CD4-positive, alpha-beta memory T cell (primary cell): ENCODE measurements at regions of chr11 and their contacts with region 1.

Region 1: DNA sequence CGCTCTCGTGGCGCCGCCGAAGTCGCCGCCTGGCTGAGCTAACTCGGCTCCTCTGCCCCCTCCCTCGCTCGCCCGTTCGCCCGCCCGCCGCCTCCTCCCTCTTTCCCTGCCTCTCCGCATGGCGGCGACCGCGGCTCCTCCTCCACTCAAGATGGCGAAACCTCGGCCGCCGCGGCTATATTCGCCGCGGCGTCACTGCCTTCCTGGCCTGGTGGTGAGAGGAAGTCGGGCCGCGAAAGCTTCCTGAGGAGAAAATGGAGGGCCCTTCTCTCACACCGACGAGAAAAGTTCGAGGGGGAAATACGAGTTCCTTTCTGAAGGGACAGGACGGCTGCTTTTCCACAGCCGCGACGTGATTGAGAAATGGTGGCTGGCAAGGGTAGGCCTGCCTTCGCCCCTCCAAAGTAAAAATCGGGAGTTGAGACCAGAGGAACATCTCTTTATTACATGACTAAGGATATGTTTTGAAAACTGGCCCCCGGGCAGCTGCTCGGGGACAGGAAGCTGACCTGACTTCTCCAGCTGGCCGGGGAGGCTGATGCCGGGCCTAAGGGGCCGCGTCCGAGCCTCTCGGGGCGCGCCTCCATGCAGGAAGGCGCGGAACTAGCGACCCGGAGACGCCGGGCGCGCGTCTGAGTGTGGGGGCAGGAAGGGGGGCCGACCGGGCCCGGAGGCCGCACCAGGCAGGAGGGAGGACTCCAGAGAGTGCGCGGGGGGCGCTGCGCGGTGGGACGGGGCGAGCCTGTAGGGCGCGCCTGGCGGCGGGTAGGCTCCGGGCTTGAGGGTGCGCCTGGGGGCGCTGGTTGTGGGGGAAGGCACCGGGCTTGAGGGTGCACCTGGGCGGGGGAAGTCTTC is at the start of gene DDX6:
- DNase-seq: peak; percentile 89 to 92 (median 91)
- H3K4me3 ChIP-seq: peak within 1 kb of the TSS; percentile 68 to 98
- H3K4me3 Mint-ChIP-seq: peak within 1 kb of the TSS; percentile 95 to 100 (median 99)
- H3K27ac ChIP-seq: peak within 1 kb of the TSS; percentile 99
- H3K27ac Mint-ChIP-seq: peak within 1 kb of the TSS; percentile 98 to 100 (median 99)
- H3K4me1 ChIP-seq: peaks cover 30% of the 10 kb centered on the region
- H3K4me1 Mint-ChIP-seq: peaks cover 9 to 54% (median 18%) of the 10 kb centered on the region in 4 donors
- H3K27me3 ChIP-seq: no peaks in the 10 kb centered on the region
- H3K27me3 Mint-ChIP-seq: no peaks in the 10 kb centered on the region
- total RNA-seq, gene DDX6: 299 to 304 TPM

Region 2: GRCh38 chr11:118705111-118705741 is 86.1 kb before region 1 on chr11:
- CTCF ChIA-PET with region 1: interaction called, 9 read pairs
- POLR2A ChIA-PET with region 1: interaction called, 98 read pairs
- intact Hi-C with region 1: no loop called
- DNase-seq: peak; percentile 63 to 72 (median 70)
- H3K4me3 ChIP-seq: peak overlapping the region in 1 of 2 donors; percentile 29
- H3K4me3 Mint-ChIP-seq: peak overlapping the region; percentile 48 to 90 (median 74)
- H3K27ac ChIP-seq: peak overlapping the region; percentile 3
- H3K27ac Mint-ChIP-seq: peak overlapping the region; percentile 61 to 95 (median 89)
- H3K4me1 ChIP-seq: peaks cover 50% of the 10 kb centered on the region
- H3K4me1 Mint-ChIP-seq: peaks cover 27 to 48% (median 37%) of the 10 kb centered on the region in 4 donors
- H3K27me3 ChIP-seq: no peaks in the 10 kb centered on the region
- H3K27me3 Mint-ChIP-seq: no peaks in the 10 kb centered on the region

Region 3: DNA sequence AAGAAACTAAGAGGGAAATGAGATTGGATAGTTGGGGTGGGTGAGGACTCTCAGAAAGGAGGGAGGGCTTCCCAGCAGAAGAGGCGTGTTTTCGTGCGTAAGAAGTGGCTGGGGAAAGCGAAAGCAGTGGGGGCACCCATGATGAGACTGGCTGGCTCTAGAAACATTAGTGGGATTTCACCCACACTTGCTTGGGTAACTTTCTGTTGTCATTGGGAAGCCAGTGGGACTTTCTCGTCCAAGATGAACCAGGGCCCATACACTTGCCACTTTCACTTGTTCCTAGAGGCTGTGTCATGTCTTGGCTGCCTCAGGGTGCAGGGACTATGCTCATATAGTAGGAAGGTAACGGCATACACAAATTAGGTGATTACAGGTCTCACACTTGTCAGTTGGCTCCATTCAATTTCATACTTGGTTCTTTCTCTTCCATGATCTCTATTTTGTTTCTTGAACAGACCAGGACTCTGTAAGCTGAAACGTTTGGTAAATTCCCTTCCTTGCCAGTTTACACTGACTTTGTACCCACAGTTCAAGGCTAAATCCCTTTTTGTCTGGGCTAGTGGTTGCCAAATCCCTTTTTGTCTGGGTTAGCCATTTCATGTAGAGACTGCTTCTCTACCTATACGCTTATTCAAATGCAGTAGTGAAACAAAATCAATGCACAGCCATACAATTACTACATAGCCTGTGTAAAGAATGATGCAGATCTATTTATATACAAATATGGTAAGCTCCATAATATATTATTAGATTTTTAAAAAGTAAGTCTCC is 50.3 kb after region 1 on chr11:
- CTCF ChIA-PET with region 1: interaction called, 6 read pairs
- POLR2A ChIA-PET with region 1: interaction called, 4 read pairs
- intact Hi-C with region 1: loop called (anchors 5 kb)
- DNase-seq: peak; percentile 50 to 77 (median 56)
- H3K4me3 ChIP-seq: peak overlapping the region; percentile 30 to 49
- H3K4me3 Mint-ChIP-seq: peak overlapping the region; percentile 82 to 89 (median 86)
- H3K27ac ChIP-seq: peak overlapping the region; percentile 57
- H3K27ac Mint-ChIP-seq: peak overlapping the region; percentile 59 to 93 (median 92)
- H3K4me1 ChIP-seq: peaks cover 7% of the 10 kb centered on the region
- H3K4me1 Mint-ChIP-seq: peaks cover 7 to 17% (median 15%) of the 10 kb centered on the region in 4 donors
- H3K27me3 ChIP-seq: no peaks in the 10 kb centered on the region
- H3K27me3 Mint-ChIP-seq: no peaks in the 10 kb centered on the region

Region 4: GRCh38 chr11:118883368-118884071 is 92.2 kb after region 1 on chr11 and contains the start of gene CXCR5:
- CTCF ChIA-PET with region 1: interaction called, 62 read pairs
- POLR2A ChIA-PET with region 1: interaction called, 231 read pairs
- intact Hi-C with region 1: no loop called
- DNase-seq: peak; percentile 44 to 73 (median 51)
- H3K4me3 ChIP-seq: peak within 1 kb of the TSS; percentile 34 to 51
- H3K4me3 Mint-ChIP-seq: peak within 1 kb of the TSS; percentile 76 to 91 (median 87)
- H3K27ac ChIP-seq: peak within 1 kb of the TSS; percentile 64
- H3K27ac Mint-ChIP-seq: peak within 1 kb of the TSS; percentile 91 to 97 (median 94)
- H3K4me1 ChIP-seq: peaks cover 70% of the 10 kb centered on the region
- H3K4me1 Mint-ChIP-seq: peaks cover 46 to 87% (median 60%) of the 10 kb centered on the region in 4 donors
- H3K27me3 ChIP-seq: no peaks in the 10 kb centered on the region
- H3K27me3 Mint-ChIP-seq: no peaks in the 10 kb centered on the region
- total RNA-seq, gene CXCR5: 21.1 to 21.5 TPM

Region 5: DNA sequence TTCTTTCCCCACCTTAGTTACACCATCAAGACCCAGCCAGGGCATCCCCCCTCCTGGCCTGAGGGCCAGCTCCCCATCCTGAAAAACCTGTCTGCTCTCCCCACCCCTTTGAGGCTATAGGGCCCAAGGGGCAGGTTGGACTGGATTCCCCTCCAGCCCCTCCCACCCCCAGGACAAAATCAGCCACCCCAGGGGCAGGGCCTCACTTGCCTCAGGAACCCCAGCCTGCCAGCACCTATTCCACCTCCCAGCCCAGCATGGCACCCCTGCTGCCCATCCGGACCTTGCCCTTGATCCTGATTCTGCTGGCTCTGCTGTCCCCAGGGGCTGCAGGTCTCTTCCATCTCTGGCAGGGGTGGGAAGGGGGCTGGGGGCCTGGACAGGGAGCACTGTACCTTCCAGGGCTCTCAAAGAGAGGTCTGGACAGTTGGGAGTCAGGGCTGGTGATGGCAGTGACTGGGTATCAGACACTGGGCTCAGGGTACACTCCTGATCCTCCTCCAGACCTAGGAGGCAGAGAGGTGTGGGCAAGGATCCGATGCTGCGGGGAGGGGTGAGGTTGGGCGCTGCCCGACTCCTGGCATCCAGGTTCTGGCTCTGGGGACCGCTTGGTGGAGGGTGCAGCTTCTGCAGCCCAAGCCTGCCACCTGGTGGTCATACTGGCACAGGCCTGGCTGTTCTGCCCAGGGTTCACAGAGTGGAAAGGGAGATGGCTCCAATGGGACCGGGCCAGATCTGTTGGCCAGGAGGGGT is 164.9 kb after region 1 on chr11 and contains the start of gene UPK2:
- CTCF ChIA-PET with region 1: interaction called, 15 read pairs
- POLR2A ChIA-PET with region 1: interaction called, 4 read pairs
- intact Hi-C with region 1: loop called (anchors 2 kb)
- DNase-seq: peak; percentile 83 to 85 (median 83)
- H3K4me3 ChIP-seq: no peak within 1 kb of the TSS
- H3K4me3 Mint-ChIP-seq: no peak within 1 kb of the TSS
- H3K27ac ChIP-seq: no peak within 1 kb of the TSS
- H3K27ac Mint-ChIP-seq: peak within 1 kb of the TSS in 4 of 7 donors; percentile 42 to 55 (median 51)
- H3K4me1 ChIP-seq: peaks cover 5% of the 10 kb centered on the region
- H3K4me1 Mint-ChIP-seq: peaks cover 4 to 5% (median 4%) of the 10 kb centered on the region in 4 donors
- H3K27me3 ChIP-seq: no peaks in the 10 kb centered on the region
- H3K27me3 Mint-ChIP-seq: peaks cover under 1 to 4% of the 10 kb centered on the region in 2 donors
- total RNA-seq, gene UPK2: not detected

Region 6: GRCh38 chr11:120612513-120613263 is 1821.3 kb after region 1 on chr11:
- CTCF ChIA-PET with region 1: no interaction called
- POLR2A ChIA-PET with region 1: no interaction called
- intact Hi-C with region 1: no loop called
- DNase-seq: no peak
- H3K4me3 ChIP-seq: no peak overlapping the region
- H3K4me3 Mint-ChIP-seq: no peak overlapping the region
- H3K27ac ChIP-seq: no peak overlapping the region
- H3K27ac Mint-ChIP-seq: no peak overlapping the region
- H3K4me1 ChIP-seq: no peaks in the 10 kb centered on the region
- H3K4me1 Mint-ChIP-seq: no peaks in the 10 kb centered on the region
- H3K27me3 ChIP-seq: no peaks in the 10 kb centered on the region
- H3K27me3 Mint-ChIP-seq: peaks cover 12 to 21% of the 10 kb centered on the region in 2 donors